ENCODE measurements at regions of chr6 and their contacts with region 1.

Region 1: DNA sequence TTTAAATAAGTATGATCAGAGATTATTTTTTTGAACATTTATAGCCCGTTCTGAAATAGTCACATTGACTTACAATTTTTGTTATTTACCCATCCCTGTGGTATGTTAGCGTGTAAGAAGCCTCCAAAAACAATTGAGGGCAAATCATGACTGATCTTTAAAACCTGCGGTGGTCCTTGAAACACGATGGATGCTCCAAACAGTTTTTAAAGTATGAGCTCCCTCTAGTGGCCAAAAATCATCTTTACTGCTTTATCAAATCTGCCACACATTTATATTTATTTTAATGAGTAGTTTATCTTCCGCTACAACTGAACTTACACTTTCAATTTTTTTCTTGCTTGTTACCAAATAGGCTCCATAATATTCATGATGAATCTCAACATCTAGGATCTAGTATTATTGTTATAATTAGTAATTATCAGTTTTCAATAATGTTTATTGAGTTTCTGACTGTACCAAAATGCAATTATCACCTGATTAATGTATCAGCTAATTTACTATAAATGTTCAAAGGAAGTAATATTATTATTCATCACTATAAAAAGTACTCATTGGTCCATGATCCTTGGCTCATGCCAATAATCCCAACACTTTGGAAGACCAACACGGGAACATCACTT is 52.2 kb downstream of the MARCKS start:
- DNase-seq: no peak
- ATAC-seq: peak in 1 of 2 donors; percentile 39
- H3K4me3 ChIP-seq: no peak overlapping the region
- H3K27ac ChIP-seq: no peak overlapping the region
- H3K4me1 ChIP-seq: no peaks in the 10 kb centered on the region
- H3K27me3 ChIP-seq: no peaks in the 10 kb centered on the region
- CTCF ChIP-seq: peak; percentile 51 to 78 (median 57)
- POLR2A ChIP-seq: no peak

Region 2: DNA sequence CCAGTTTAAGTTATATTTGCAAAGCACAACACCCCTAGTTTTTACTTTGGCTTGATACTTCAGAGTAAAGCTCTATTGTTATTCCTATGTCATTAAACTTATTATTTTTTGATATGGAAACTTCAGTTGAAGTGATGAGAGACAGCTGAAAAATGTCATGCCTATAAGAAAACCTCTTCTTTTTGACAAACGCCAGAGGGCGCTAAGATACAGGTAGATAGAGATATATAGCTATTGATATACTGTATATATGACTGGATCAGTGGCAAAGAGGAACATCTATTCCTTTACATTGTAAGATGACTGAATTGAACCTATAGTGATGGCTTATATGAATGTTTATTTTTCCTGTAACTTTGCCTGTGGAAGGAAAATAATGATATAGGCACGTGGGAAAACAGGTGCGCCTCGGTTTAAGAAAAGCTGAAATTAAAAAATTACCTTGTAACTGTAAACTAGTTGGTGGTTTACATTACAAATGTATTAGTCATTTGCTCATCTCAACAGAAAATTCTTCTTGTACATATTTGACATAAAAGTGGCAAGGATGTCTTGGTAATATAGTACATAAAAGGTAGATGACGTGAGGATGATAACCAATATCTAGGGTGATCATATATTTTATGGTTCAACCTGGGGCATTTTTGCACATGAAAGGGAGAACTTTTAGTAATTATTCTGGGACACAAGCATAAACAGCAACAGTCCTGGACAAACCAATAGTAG is 1729.1 kb before region 1 on chr6:
- in situ Hi-C with region 1: loop called in 2 of 4 experiments (anchors 25 kb)
- intact Hi-C with region 1: loop called (anchors 5 kb)
- DNase-seq: peak in 1 of 2 donors; percentile 25
- ATAC-seq: peak in 1 of 2 donors; percentile 66
- H3K4me3 ChIP-seq: no peak overlapping the region
- H3K27ac ChIP-seq: no peak overlapping the region
- H3K4me1 ChIP-seq: no peaks in the 10 kb centered on the region
- H3K27me3 ChIP-seq: no peaks in the 10 kb centered on the region
- CTCF ChIP-seq: peak; percentile 59 to 71 (median 66)
- POLR2A ChIP-seq: no peak

Region 3: DNA sequence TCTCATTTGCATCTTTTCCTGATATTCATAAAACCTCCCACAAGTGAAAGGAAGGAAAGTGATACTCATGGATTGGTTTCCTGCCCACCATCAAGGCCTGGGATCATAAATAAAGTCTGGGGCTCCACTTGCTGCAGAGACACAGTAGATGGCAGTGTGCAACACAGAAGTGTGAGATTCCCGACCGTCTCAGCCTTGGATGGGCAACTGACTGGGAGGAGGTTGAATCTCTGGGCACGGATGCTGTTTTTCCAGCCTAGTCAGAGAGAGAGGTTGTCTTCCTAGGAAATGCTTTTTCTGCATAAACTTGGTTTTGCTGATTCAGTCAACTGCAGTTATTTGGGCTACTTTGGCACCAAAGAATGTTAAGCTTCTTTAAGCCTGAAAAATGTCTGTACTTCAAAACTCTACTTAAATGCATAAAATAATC is 1572.1 kb before region 1 on chr6:
- in situ Hi-C with region 1: loop called in 1 of 4 experiments (anchors 25 kb)
- intact Hi-C with region 1: no loop called
- DNase-seq: peak; percentile 8 to 22
- ATAC-seq: peak in 1 of 2 donors; percentile 56
- H3K4me3 ChIP-seq: no peak overlapping the region
- H3K27ac ChIP-seq: no peak overlapping the region
- H3K4me1 ChIP-seq: no peaks in the 10 kb centered on the region
- H3K27me3 ChIP-seq: no peaks in the 10 kb centered on the region
- CTCF ChIP-seq: peak in 2 of 5 experiments; percentile 25 to 33
- POLR2A ChIP-seq: no peak

Region 4: GRCh38 chr6:112773187-112773586 is 1136.2 kb before region 1 on chr6:
- in situ Hi-C with region 1: loop called (anchors 5 to 25 kb)
- intact Hi-C with region 1: no loop called
- DNase-seq: no peak
- ATAC-seq: no peak
- H3K4me3 ChIP-seq: no peak overlapping the region
- H3K27ac ChIP-seq: no peak overlapping the region
- H3K4me1 ChIP-seq: no peaks in the 10 kb centered on the region
- H3K27me3 ChIP-seq: no peaks in the 10 kb centered on the region
- CTCF ChIP-seq: no peak
- POLR2A ChIP-seq: no peak

Region 5: DNA sequence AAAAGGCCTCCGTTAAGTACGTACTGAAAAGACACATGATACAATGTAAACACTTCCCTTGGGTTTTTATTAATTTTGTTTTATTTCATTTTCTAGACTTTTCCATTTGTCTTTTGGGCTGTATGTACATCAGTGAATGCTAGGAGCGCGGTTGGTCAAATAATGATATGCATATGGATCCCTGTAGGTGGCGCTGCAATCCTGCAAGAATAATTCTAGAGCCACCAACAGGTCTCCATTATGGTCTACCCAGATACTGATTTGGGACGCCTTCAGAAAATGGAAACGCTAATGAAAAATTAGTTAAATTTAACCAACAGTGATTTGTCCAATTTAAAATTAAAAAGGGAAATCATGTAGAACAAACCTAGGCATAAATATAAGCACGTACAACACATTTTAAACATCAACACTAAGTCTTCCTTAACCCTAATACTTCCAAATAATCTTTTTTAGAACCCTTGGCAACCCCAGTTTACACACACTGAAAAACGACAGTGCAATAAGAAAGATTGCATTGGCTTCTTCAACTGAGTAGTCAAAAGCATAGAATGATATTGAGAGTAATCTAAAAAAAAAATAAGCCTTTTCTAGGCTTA is 1128.7 kb before region 1 on chr6:
- in situ Hi-C with region 1: loop called (anchors 5 to 25 kb)
- intact Hi-C with region 1: loop called (anchors 1 kb)
- DNase-seq: peak; percentile 29 to 41
- ATAC-seq: peak; percentile 68 to 80
- H3K4me3 ChIP-seq: no peak overlapping the region
- H3K27ac ChIP-seq: no peak overlapping the region
- H3K4me1 ChIP-seq: no peaks in the 10 kb centered on the region
- H3K27me3 ChIP-seq: no peaks in the 10 kb centered on the region
- CTCF ChIP-seq: peak; percentile 57 to 78 (median 73)
- POLR2A ChIP-seq: no peak

Region 6: GRCh38 chr6:113782636-113783035 is 126.7 kb before region 1 on chr6:
- in situ Hi-C with region 1: no loop called
- intact Hi-C with region 1: no loop called
- DNase-seq: no peak
- ATAC-seq: no peak
- H3K4me3 ChIP-seq: no peak overlapping the region
- H3K27ac ChIP-seq: no peak overlapping the region
- H3K4me1 ChIP-seq: no peaks in the 10 kb centered on the region
- H3K27me3 ChIP-seq: no peaks in the 10 kb centered on the region
- CTCF ChIP-seq: no peak
- POLR2A ChIP-seq: no peak

Measured in gastrocnemius medialis (tissue), 4 donors.